ENCODE measurements at regions of chr13 and their contacts with region 1.

Region 1: DNA sequence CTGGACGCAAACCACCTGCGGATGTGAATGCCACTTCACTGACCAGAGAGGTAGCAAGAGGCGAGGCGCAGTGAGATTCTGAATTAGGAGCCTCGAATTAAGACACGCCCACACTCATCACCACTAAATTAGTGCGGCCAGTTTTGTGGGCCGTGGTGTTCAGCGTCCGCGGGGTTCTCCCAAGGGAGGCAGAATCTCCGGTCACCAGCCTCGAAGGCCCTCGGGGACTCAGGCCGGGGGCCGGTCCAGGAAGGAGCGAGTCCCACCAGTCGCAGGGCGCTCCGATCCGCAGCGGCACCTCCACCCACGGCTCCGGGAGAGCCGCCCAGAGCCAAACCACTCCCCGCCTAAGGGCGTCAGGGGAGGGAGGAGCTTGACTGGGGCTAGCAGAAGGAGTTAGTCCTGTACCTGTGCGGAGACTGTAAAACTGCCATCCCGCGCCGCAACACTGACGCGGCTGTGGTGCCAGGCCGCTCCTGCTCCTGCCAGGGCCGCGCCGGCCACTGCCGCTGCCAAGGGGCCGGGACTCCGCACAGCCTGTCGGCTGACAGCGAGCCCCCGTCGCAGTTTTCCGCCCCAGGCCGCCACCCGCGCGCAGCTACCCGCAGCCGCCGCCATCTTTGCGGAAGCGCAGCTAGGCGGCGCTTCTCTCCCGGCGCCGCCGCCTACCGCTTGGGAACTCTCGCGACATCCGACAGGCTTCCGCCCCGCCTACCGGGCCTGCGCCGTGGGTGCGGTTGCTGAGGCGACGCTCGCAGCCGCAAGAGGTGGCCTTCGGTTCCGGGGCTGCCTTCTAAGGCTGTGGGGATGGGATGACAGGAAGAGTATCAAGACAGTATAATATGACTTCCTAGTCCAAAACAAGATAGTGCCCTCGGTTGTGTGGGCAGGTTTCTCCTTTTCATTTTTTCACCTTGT is at the start of gene MICU2:
- DNase-seq: peak; percentile 95
- H3K4me3 ChIP-seq: peak within 1 kb of the TSS; percentile 39 to 98 (median 75)
- H3K27ac ChIP-seq: peak within 1 kb of the TSS; percentile 85
- H3K4me1 ChIP-seq: peaks cover 5% of the 10 kb centered on the region
- H3K27me3 ChIP-seq: peaks cover 10 to 27% of the 10 kb centered on the region in 2 experiments
- CTCF ChIP-seq: peak in 1 of 2 donors; percentile 10
- POLR2A ChIP-seq: peak; percentile 93
- total RNA-seq, gene MICU2: 24.0 and 25.1 TPM in 2 replicates

Region 2: DNA sequence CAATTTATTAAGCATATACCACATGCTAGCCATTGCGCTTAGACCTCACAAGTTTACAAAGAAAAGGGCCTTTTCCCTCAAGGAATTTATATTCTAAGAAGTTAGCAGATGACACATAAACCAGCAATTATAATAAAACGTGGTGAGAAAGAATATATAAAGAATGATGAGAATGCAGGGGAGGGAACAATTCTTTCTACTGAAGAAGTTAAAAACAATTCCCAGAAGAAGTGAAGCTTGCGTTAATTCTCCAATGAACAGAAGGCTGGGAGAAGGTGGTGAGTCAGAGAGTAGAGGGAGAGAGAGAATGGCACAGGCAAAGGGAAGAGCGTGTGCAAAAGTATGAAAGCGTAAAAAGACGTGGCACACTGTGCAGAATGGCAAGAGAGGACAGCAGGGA is 75.2 kb before region 1 on chr13:
- CTCF ChIA-PET with region 1: no interaction called
- POLR2A ChIA-PET with region 1: no interaction called
- dilution Hi-C with region 1: no loop called
- intact Hi-C with region 1: no loop called
- DNase-seq: no peak
- H3K4me3 ChIP-seq: no peak overlapping the region
- H3K27ac ChIP-seq: no peak overlapping the region
- H3K4me1 ChIP-seq: no peaks in the 10 kb centered on the region
- H3K27me3 ChIP-seq: no peaks in the 10 kb centered on the region
- CTCF ChIP-seq: no peak
- POLR2A ChIP-seq: no peak

Region 3: DNA sequence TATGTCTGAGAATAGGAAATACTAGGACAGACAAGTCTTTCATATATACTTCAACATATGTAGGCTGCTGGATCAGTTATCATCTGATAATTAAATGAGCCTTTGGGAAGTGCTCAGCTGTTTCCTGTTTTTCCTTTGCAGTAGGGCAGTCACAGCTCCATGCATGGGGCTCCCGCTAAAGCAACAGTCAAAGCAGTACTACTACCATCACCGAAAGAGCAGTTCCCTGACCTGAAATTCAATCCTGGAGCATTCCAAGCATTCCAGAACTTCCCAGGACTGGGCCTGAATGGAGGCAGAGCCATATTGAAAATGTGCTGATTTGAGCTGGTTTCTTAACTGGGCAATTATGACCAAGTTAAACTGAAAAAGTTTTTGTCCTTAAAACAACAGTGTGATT is 20.3 kb before region 1 on chr13:
- CTCF ChIA-PET with region 1: interaction called, 9 read pairs
- POLR2A ChIA-PET with region 1: interaction called, 14 read pairs
- dilution Hi-C with region 1: no loop called
- intact Hi-C with region 1: loop called (anchors 2 kb)
- DNase-seq: peak; percentile 96
- H3K4me3 ChIP-seq: no peak overlapping the region
- H3K27ac ChIP-seq: peak overlapping the region; percentile 63
- H3K4me1 ChIP-seq: peaks cover 40% of the 10 kb centered on the region
- H3K27me3 ChIP-seq: no peaks in the 10 kb centered on the region
- CTCF ChIP-seq: no peak
- POLR2A ChIP-seq: no peak

Region 4: DNA sequence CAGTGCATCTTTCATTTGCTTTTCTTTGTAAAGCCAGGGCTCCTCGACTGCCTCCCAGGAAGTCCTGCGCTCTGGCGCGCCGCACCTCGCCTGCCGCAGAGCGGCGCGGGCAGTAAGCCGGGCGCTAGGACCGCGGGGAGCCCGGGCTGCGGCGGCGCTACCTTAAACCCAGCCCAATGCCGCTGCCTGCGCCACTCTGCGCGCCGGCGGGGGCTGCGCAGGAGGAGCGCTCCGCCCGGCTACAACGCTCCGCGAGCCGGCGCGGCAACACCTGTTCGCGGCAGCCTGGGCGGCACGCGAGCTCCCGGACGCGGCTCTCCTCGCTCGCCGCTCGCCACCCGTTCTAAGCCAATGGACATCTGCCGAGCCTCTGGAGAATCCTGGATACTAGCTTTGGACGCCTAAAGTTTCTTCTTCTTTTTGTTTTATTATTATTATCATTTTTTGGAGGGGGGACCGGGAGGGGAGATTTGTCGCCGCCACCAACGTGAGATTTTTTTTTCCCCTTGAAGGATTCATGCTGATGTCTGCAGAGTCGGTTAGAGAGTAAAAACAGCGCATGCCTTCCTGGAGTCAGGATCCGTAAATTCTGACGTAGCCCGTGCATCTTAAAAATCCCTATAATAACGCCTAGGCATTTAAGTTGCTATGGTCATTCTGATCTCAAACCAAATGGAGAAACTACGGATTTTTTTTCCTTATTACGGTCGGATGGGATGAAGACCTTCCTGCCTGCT is 67.3 kb after region 1 on chr13 and contains the start of gene FGF9:
- CTCF ChIA-PET with region 1: no interaction called
- POLR2A ChIA-PET with region 1: no interaction called
- dilution Hi-C with region 1: no loop called
- intact Hi-C with region 1: loop called (anchors 2 kb)
- DNase-seq: peak; percentile 54
- H3K4me3 ChIP-seq: peak within 1 kb of the TSS; percentile 23 to 34 (median 32)
- H3K27ac ChIP-seq: no peak within 1 kb of the TSS
- H3K4me1 ChIP-seq: peaks cover 19% of the 10 kb centered on the region
- H3K27me3 ChIP-seq: peaks cover 46 to 74% of the 10 kb centered on the region in 2 experiments
- CTCF ChIP-seq: no peak
- POLR2A ChIP-seq: no peak
- total RNA-seq, gene FGF9: not detected in 2 replicates

Measured in endothelial cell of umbilical vein (primary cell).